Heart left ventricle (tissue), 16 donors: ENCODE measurements at regions of chr13 and their contacts with region 1.

Region 1: GRCh38 chr13:39462428-39462827 is 140.6 kb downstream of the LHFPL6 start:
- DNase-seq: no peak
- ATAC-seq: peak; percentile 56 to 91 (median 86)
- H3K4me3 ChIP-seq: peak overlapping the region in 7 of 12 donors; percentile 3 to 32 (median 11)
- H3K27ac ChIP-seq: peak overlapping the region; percentile 6 to 80 (median 67)
- H3K4me1 ChIP-seq: peaks cover 0 to 79% (median 35%) of the 10 kb centered on the region in 12 donors
- H3K27me3 ChIP-seq: no peaks in the 10 kb centered on the region
- CTCF ChIP-seq: no peak
- POLR2A ChIP-seq: no peak

Region 2: GRCh38 chr13:39494006-39494405 is 31.6 kb after region 1 on chr13:
- intact Hi-C with region 1: loop called in 1 of 10 experiments (anchors 5 kb)
- DNase-seq: no peak
- ATAC-seq: peak in 1 of 4 donors; percentile 16
- H3K4me3 ChIP-seq: no peak overlapping the region
- H3K27ac ChIP-seq: no peak overlapping the region
- H3K4me1 ChIP-seq: peaks cover 0 to 85% (median 48%) of the 10 kb centered on the region in 12 donors
- H3K27me3 ChIP-seq: no peaks in the 10 kb centered on the region
- CTCF ChIP-seq: no peak
- POLR2A ChIP-seq: no peak

Region 3: DNA sequence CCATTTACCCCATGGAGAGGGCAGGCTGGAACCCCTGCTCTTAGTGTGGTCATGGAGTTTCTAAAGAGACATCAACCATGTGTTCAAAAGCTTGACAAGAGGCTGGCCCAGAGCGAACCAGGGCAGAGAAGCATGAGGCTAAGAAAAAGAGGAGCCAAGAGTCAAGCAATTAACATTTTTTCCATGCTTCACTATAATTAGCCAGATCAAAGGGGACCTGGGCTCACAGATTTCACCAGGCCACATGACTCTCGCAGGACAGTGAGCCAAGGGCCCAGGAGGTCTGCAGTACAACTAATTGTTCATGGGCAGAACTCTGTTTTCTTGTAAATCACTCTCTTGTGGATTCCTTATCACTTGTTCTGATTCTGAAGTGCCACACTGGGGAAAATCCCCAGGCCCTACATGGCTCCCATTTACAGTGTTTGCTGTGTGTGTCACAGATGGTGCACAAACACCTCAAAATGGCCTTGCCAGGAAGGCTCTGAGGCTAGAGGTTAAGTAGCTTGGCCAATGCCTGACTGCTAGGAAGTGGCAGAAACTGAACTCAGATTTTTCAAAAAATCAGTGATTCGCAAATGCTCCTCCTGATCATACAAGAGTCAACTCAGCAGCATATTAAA is 39.4 kb after region 1 on chr13:
- intact Hi-C with region 1: loop called in 4 of 10 experiments (anchors 1 to 5 kb)
- DNase-seq: peak in 4 of 5 donors; percentile 61 to 78 (median 70)
- ATAC-seq: peak; percentile 89 to 93 (median 91)
- H3K4me3 ChIP-seq: no peak overlapping the region
- H3K27ac ChIP-seq: peak overlapping the region; percentile 22 to 87 (median 76)
- H3K4me1 ChIP-seq: peaks cover 0 to 88% (median 49%) of the 10 kb centered on the region in 12 donors
- H3K27me3 ChIP-seq: no peaks in the 10 kb centered on the region
- CTCF ChIP-seq: no peak
- POLR2A ChIP-seq: no peak

Region 4: GRCh38 chr13:39510316-39510695 is 47.9 kb after region 1 on chr13:
- intact Hi-C with region 1: loop called in 3 of 10 experiments (anchors 1 to 10 kb)
- DNase-seq: no peak
- ATAC-seq: peak in 1 of 4 donors; percentile 18
- H3K4me3 ChIP-seq: no peak overlapping the region
- H3K27ac ChIP-seq: peak overlapping the region in 1 of 12 donors; percentile 18
- H3K4me1 ChIP-seq: peaks cover 4 to 67% (median 26%) of the 10 kb centered on the region in 12 donors
- H3K27me3 ChIP-seq: no peaks in the 10 kb centered on the region
- CTCF ChIP-seq: no peak
- POLR2A ChIP-seq: no peak

Region 5: DNA sequence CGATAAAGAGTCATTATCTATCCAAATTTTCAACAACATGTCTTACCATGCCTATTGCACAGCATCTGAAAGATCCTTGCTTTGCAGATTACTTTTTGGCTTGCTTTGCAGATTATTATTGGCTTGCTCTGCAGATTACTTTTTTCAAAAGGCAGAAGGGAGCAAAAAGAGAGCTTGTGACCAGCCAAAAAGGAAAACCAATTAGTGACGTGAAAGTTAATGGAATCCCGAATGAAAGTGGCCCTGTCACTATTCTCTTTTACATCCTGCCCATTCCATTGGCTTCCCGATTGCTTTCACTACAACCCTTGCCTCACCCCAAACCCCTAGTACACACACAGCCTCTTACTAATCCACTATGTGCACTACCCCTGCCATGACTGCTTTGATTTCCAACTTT is 59.3 kb after region 1 on chr13:
- intact Hi-C with region 1: loop called in 2 of 10 experiments (anchors 5 to 10 kb)
- DNase-seq: no peak
- ATAC-seq: no peak
- H3K4me3 ChIP-seq: no peak overlapping the region
- H3K27ac ChIP-seq: peak overlapping the region in 1 of 12 donors; percentile 2
- H3K4me1 ChIP-seq: peaks cover 3 to 86% (median 55%) of the 10 kb centered on the region in 12 donors
- H3K27me3 ChIP-seq: no peaks in the 10 kb centered on the region
- CTCF ChIP-seq: no peak
- POLR2A ChIP-seq: no peak

Region 6: DNA sequence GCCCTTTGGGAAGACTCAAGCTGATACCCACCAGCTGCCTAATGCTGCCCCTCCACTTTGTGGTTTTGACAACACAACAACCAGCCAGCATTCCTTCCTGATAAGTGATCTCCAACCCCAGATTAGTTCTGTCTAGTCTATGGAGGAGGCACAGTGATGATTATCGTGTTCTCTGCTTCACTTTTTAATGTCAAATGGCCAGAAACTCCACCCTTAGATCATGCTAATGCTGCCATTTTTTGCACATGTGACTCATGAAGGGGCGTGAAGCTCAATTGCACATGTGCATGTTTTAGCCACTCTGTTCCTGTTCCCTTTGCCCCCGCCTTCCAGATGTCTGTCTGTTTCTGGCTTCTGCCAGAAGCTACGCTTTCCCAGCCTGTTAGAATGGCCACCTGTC is 392.8 kb after region 1 on chr13:
- intact Hi-C with region 1: no loop called
- DNase-seq: no peak
- ATAC-seq: peak in 1 of 4 donors; percentile 11
- H3K4me3 ChIP-seq: no peak overlapping the region
- H3K27ac ChIP-seq: no peak overlapping the region
- H3K4me1 ChIP-seq: no peaks in the 10 kb centered on the region
- H3K27me3 ChIP-seq: no peaks in the 10 kb centered on the region
- CTCF ChIP-seq: no peak
- POLR2A ChIP-seq: no peak